ENCODE measurements at regions of chr2 and their contacts with region 1.

Region 1: DNA sequence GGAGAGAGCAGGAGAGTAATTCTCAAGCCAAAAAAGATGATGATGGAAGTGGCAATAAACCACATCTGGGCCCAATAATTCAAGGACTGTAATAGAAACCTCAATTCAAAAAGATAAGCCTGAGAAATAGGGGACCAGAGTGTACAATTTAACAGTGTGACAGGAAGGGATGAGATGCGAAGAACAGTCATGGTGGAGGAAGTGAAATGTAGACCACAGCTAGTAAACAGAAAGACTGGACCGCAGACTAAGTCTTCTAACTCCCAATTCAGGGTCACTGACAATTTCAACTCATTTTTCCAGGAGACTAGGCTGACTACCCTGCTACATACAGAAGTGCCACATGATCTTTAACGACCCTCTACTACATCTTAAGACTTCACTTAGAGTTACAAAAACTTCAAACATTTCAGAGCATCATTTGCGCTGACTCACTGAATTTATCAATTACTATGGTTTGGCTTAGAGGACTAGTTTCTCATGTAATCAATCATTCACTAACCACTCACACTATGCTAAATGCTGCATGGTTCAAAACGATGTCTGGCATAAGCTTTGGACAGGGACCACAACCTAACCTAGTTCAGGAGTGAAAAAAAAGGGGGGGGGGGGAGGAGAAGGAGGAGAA is 9.0 kb downstream of the CUL3 start:
- DNase-seq: no peak
- H3K4me3 ChIP-seq: no peak overlapping the region
- H3K27ac ChIP-seq: no peak overlapping the region
- H3K4me1 ChIP-seq: peaks cover 7% of the 10 kb centered on the region
- H3K27me3 ChIP-seq: no peaks in the 10 kb centered on the region
- CTCF ChIP-seq: no peak
- POLR2A ChIP-seq: no peak

Region 2: GRCh38 chr2:224507789-224508188 is 68.4 kb before region 1 on chr2:
- CTCF ChIA-PET with region 1: no interaction called
- POLR2A ChIA-PET with region 1: interaction called, 4 read pairs
- dilution Hi-C with region 1: no loop called
- intact Hi-C with region 1: loop called (anchors 5 kb)
- DNase-seq: no peak
- H3K4me3 ChIP-seq: no peak overlapping the region
- H3K27ac ChIP-seq: no peak overlapping the region
- H3K4me1 ChIP-seq: no peaks in the 10 kb centered on the region
- H3K27me3 ChIP-seq: no peaks in the 10 kb centered on the region
- CTCF ChIP-seq: no peak
- POLR2A ChIP-seq: no peak

Measured in endothelial cell of umbilical vein (primary cell).